Activated CD4-positive, alpha-beta T cell treated with anti-CD3 and anti-CD28 coated beads for 36 hours (primary cell): ENCODE measurements at regions of chr11 and their contacts with region 1.

Region 1: GRCh38 chr11:82927254-82927880 is 25.8 kb downstream of the DDIAS start:
- DNase-seq: peak; percentile 22
- ATAC-seq: peak; percentile 81
- H3K4me3 Mint-ChIP-seq: no peak overlapping the region
- H3K27ac Mint-ChIP-seq: no peak overlapping the region
- H3K4me1 Mint-ChIP-seq: peaks cover 21% of the 10 kb centered on the region
- H3K27me3 Mint-ChIP-seq: no peaks in the 10 kb centered on the region

Region 2: GRCh38 chr11:82701847-82702520 is 225.4 kb before region 1 on chr11:
- CTCF ChIA-PET with region 1: no interaction called
- POLR2A ChIA-PET with region 1: no interaction called
- intact Hi-C with region 1: no loop called
- DNase-seq: peak; percentile 42
- ATAC-seq: no peak
- H3K4me3 Mint-ChIP-seq: no peak overlapping the region
- H3K27ac Mint-ChIP-seq: no peak overlapping the region
- H3K4me1 Mint-ChIP-seq: no peaks in the 10 kb centered on the region
- H3K27me3 Mint-ChIP-seq: peaks cover 5% of the 10 kb centered on the region

Region 3: GRCh38 chr11:82718307-82718706 is 209.1 kb before region 1 on chr11:
- CTCF ChIA-PET with region 1: no interaction called
- POLR2A ChIA-PET with region 1: no interaction called
- intact Hi-C with region 1: loop called in 1 of 2 experiments (anchors 1 kb)
- DNase-seq: peak; percentile 41
- ATAC-seq: peak; percentile 55
- H3K4me3 Mint-ChIP-seq: no peak overlapping the region
- H3K27ac Mint-ChIP-seq: no peak overlapping the region
- H3K4me1 Mint-ChIP-seq: no peaks in the 10 kb centered on the region
- H3K27me3 Mint-ChIP-seq: peaks cover under 1% of the 10 kb centered on the region

Region 4: GRCh38 chr11:82733444-82734119 is 193.8 kb before region 1 on chr11 and contains the start of gene FAM181B:
- CTCF ChIA-PET with region 1: no interaction called
- POLR2A ChIA-PET with region 1: no interaction called
- intact Hi-C with region 1: no loop called
- DNase-seq: peak; percentile 61
- ATAC-seq: peak; percentile 82
- H3K4me3 Mint-ChIP-seq: peak within 1 kb of the TSS; percentile 45
- H3K27ac Mint-ChIP-seq: no peak within 1 kb of the TSS
- H3K4me1 Mint-ChIP-seq: peaks cover 10% of the 10 kb centered on the region
- H3K27me3 Mint-ChIP-seq: peaks cover 44% of the 10 kb centered on the region
- total RNA-seq, gene FAM181B: not detected

Region 5: GRCh38 chr11:82811369-82811768 is 116.0 kb before region 1 on chr11:
- CTCF ChIA-PET with region 1: no interaction called
- POLR2A ChIA-PET with region 1: no interaction called
- intact Hi-C with region 1: no loop called
- DNase-seq: no peak
- ATAC-seq: no peak
- H3K4me3 Mint-ChIP-seq: no peak overlapping the region
- H3K27ac Mint-ChIP-seq: no peak overlapping the region
- H3K4me1 Mint-ChIP-seq: no peaks in the 10 kb centered on the region
- H3K27me3 Mint-ChIP-seq: peaks cover 22% of the 10 kb centered on the region

Region 6: DNA sequence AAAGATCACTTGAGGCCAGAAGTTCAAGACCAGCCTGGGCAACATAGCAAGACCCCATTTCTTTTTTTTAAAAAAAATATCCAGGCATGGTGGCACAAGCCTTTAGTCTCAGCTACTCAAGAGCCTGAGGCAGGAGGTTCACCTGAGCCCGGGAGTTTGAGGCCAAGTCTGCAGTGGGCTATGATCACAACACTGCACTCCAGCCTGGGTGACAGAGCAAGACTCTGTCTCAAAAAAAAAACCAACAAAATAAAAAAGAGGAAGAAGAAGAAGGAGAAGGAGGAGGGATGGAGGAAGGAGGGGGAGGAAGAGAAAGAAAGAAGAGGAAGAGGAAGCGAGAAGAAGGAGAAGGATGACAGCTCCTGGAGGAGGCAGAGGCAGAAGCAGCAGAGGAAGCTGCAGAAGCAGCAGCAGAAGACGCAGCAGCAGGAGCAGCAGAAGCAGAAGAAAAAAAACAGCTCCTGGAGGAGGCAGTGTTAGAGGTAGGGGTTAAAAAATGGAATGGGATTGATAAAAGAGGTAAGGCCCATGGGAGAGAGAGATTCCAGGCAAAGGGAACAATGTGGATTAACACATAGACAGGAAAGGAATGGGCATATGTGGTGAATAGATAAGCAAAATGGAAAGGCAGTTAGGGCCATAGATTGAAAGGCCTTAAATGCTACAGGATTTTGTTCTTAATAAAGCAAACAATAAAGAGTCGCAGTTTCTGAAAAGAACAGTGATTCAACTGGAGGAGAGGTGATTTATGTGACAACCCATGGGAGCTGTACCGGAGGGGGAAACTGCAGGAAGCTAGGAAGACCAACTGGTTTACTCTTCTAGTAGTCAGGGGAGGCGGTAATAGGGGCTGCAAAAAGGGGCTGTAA is 38.0 kb before region 1 on chr11:
- CTCF ChIA-PET with region 1: no interaction called
- POLR2A ChIA-PET with region 1: no interaction called
- intact Hi-C with region 1: no loop called
- DNase-seq: no peak
- ATAC-seq: no peak
- H3K4me3 Mint-ChIP-seq: no peak overlapping the region
- H3K27ac Mint-ChIP-seq: no peak overlapping the region
- H3K4me1 Mint-ChIP-seq: no peaks in the 10 kb centered on the region
- H3K27me3 Mint-ChIP-seq: no peaks in the 10 kb centered on the region

Region 7: GRCh38 chr11:82906244-82906654 is 21.1 kb before region 1 on chr11:
- CTCF ChIA-PET with region 1: interaction called, 6 read pairs
- POLR2A ChIA-PET with region 1: no interaction called
- intact Hi-C with region 1: loop called (anchors 1 kb)
- DNase-seq: no peak
- ATAC-seq: no peak
- H3K4me3 Mint-ChIP-seq: no peak overlapping the region
- H3K27ac Mint-ChIP-seq: no peak overlapping the region
- H3K4me1 Mint-ChIP-seq: peaks cover 46% of the 10 kb centered on the region
- H3K27me3 Mint-ChIP-seq: no peaks in the 10 kb centered on the region